IMR-90 (cell line): ENCODE measurements at regions of chr5 and their contacts with region 1.

Region 1: DNA sequence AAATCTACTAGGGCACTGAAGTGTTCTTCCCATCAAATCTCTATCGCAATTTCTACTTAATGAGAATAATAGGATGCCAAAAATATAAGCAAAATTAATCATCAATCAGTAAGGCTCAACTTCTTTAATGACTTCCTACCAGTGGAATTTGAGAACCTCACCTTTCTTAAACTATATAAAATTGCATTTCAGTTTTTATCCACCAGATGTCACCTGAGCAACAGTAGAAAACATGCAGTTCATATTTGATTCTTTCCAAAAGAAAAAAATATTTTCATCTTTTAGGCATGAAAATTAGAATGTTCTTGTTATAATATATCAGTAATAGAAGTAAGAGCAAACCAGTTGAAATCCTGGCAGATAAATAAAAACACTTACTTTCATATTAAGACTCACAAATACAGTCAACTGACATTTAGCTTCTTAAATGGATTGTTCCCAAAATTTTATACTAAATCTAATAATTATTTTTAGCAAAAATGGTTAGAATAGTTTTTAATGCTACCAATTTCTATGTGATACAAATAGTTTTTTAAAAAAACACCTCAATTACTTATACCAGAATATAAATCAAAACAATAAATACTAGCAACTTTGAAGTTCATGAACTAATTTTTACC is 13.4 kb upstream of the CCDC112 start:
- DNase-seq: peak; percentile 58
- ATAC-seq: peak; percentile 72
- H3K4me3 ChIP-seq: no peak overlapping the region
- H3K27ac ChIP-seq: no peak overlapping the region
- H3K4me1 ChIP-seq: no peaks in the 10 kb centered on the region
- H3K27me3 ChIP-seq: peaks cover 3% of the 10 kb centered on the region
- CTCF ChIP-seq: peak; percentile 74
- POLR2A ChIP-seq: no peak
- RAD21 ChIP-seq: peak; percentile 79

Region 2: GRCh38 chr5:115262321-115263077 is 47.4 kb before region 1 on chr5 and contains the start of gene PGGT1B:
- CTCF ChIA-PET with region 1: no interaction called
- POLR2A ChIA-PET with region 1: no interaction called
- dilution Hi-C with region 1: no loop called
- in situ Hi-C with region 1: no loop called
- intact Hi-C with region 1: no loop called
- DNase-seq: peak; percentile 55
- ATAC-seq: peak; percentile 93
- H3K4me3 ChIP-seq: peak within 1 kb of the TSS; percentile 79
- H3K27ac ChIP-seq: peak within 1 kb of the TSS; percentile 91
- H3K4me1 ChIP-seq: peaks cover 7% of the 10 kb centered on the region; the same call in 1 of the 2 replicates
- H3K27me3 ChIP-seq: no peaks in the 10 kb centered on the region
- CTCF ChIP-seq: no peak
- POLR2A ChIP-seq: peak; percentile 78
- RAD21 ChIP-seq: no peak
- total RNA-seq, gene PGGT1B: 17.2 and 19.2 TPM in 2 replicates

Region 3: GRCh38 chr5:115349020-115349817 is 39.4 kb after region 1 on chr5:
- CTCF ChIA-PET with region 1: no interaction called
- POLR2A ChIA-PET with region 1: no interaction called
- dilution Hi-C with region 1: no loop called
- in situ Hi-C with region 1: no loop called
- intact Hi-C with region 1: no loop called
- DNase-seq: peak; percentile 90
- ATAC-seq: peak; percentile 91
- H3K4me3 ChIP-seq: no peak overlapping the region
- H3K27ac ChIP-seq: no peak overlapping the region
- H3K4me1 ChIP-seq: peaks cover 5% of the 10 kb centered on the region
- H3K27me3 ChIP-seq: no peaks in the 10 kb centered on the region
- CTCF ChIP-seq: no peak; the same call in 1 of the 2 replicates
- POLR2A ChIP-seq: no peak
- RAD21 ChIP-seq: no peak

Region 4: GRCh38 chr5:115377468-115378217 is 67.8 kb after region 1 on chr5:
- CTCF ChIA-PET with region 1: interaction called, 6 read pairs
- POLR2A ChIA-PET with region 1: no interaction called
- dilution Hi-C with region 1: no loop called
- in situ Hi-C with region 1: no loop called
- intact Hi-C with region 1: loop called (anchors 5 kb)
- DNase-seq: peak; percentile 94
- ATAC-seq: peak; percentile 93
- H3K4me3 ChIP-seq: peak overlapping the region; percentile 0; the same call in 1 of the 2 replicates
- H3K27ac ChIP-seq: peak overlapping the region; percentile 35; the same call in 1 of the 2 replicates
- H3K4me1 ChIP-seq: peaks cover 6% of the 10 kb centered on the region
- H3K27me3 ChIP-seq: no peaks in the 10 kb centered on the region
- CTCF ChIP-seq: peak; percentile 48
- POLR2A ChIP-seq: no peak
- RAD21 ChIP-seq: peak; percentile 59

Region 5: DNA sequence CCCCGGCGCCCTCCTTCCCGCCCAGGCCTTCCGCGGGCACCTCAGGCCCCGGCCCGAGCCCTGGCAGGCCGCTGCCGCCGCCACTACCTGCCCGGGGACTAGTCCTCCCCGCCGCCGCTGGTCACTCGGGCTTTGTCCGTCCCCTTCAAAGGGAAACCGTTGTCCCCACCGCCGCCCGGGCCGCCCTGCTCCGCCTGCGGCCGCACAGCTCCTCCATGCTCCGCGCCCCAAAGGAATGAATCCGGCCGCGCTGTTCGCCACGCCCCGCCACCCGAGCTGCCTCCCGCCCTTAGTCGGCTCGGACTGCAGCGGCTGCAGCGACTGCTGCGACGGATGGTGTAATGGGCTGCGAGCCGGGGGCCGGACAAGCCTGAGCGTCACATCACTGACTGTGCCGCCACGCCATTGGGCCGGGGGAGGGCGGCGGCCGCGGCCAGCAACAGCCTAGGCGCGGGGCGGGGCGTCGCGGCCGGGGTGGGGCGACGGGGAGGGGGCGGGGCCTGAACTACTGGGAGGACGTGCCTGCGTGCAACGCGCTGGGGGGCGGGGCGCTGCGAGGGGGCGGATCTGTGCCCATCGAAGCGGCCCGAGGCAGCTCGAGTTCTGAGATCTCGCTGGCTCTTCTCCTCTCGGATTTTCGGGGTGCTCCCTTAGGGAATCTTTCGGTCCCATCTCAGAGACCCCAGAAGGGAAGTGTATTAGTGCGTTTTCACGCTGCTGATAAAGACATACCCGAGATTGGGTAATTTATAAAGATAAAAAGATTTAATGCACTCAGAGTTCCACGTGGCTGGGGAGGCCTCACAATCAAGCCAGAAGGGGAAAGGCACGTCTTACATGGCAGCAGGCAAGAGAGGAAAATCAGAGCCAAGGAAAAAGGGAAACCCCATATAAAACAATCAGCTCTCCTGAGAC is 234.8 kb after region 1 on chr5 and contains the start of gene FEM1C:
- CTCF ChIA-PET with region 1: interaction called, 6 read pairs
- POLR2A ChIA-PET with region 1: no interaction called
- dilution Hi-C with region 1: no loop called
- in situ Hi-C with region 1: no loop called
- intact Hi-C with region 1: loop called (anchors 2 kb)
- DNase-seq: peak; percentile 97
- ATAC-seq: peak; percentile 97
- H3K4me3 ChIP-seq: peak within 1 kb of the TSS; percentile 86
- H3K27ac ChIP-seq: peak within 1 kb of the TSS; percentile 92
- H3K4me1 ChIP-seq: peaks cover 2% of the 10 kb centered on the region; the same call in 1 of the 2 replicates
- H3K27me3 ChIP-seq: no peaks in the 10 kb centered on the region
- CTCF ChIP-seq: no peak
- POLR2A ChIP-seq: peak; percentile 97
- RAD21 ChIP-seq: no peak
- total RNA-seq, gene FEM1C: 21.5 and 30.3 TPM in 2 replicates

Region 6: DNA sequence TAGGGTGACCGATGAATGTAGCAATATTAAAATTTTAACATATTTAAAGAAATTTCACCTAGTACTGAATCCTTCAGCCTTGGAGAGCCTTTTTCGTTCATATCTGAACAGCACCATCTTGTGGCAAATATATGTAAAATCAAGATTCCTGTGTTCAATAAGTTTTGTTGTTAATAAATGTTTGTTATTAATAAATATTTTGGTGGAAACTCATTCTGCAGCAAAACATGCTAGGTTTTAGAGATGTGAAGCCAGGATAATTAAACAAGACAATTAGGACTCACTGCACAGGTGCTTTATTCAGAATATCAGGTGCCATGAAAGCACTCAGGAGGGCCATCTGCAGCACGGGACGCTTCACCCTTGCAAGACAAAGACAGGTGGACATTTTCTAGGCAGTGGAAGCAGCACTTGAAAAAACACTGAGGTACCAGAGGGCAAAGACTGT is 276.8 kb after region 1 on chr5:
- CTCF ChIA-PET with region 1: interaction called, 5 read pairs
- POLR2A ChIA-PET with region 1: no interaction called
- dilution Hi-C with region 1: no loop called
- in situ Hi-C with region 1: loop called (anchors 5 kb)
- intact Hi-C with region 1: loop called (anchors 1 kb)
- DNase-seq: peak; percentile 54
- ATAC-seq: peak; percentile 52; the same call in 1 of the 2 replicates
- H3K4me3 ChIP-seq: no peak overlapping the region
- H3K27ac ChIP-seq: no peak overlapping the region
- H3K4me1 ChIP-seq: peaks cover 6% of the 10 kb centered on the region
- H3K27me3 ChIP-seq: no peaks in the 10 kb centered on the region
- CTCF ChIP-seq: peak; percentile 67
- POLR2A ChIP-seq: no peak
- RAD21 ChIP-seq: peak; percentile 77

Region 7: DNA sequence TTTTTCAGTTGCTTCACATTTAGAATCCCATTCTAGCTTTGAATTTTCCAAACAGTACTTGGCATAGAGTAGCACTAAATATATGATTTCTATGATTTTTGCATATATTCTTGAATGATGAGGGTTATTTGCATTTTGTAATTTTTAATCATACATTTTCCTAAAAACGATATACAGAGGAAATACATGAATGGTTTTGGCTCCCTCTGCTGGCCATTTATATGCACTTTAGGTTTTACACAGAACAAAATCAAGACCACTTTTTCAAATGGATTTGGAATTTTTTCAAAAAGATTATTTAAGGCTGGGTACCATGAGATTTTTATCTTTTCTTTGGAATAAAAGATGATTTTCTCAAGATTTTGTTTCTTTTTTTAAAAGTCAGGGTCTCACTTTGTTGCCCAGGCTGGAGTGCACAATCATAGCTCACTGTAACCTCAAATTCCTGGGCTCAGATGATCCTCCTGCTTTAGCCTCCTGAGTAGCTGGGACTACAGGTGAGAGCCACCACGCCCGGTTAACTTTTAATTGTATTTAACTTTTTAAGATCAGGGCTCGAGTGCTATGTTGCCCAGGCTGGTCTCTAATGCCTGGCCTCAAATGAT is 758.3 kb after region 1 on chr5:
- CTCF ChIA-PET with region 1: no interaction called
- POLR2A ChIA-PET with region 1: no interaction called
- dilution Hi-C with region 1: no loop called
- in situ Hi-C with region 1: loop called (anchors 25 kb)
- intact Hi-C with region 1: loop called (anchors 10 kb)
- DNase-seq: peak; percentile 72
- ATAC-seq: peak; percentile 66
- H3K4me3 ChIP-seq: no peak overlapping the region
- H3K27ac ChIP-seq: no peak overlapping the region
- H3K4me1 ChIP-seq: no peaks in the 10 kb centered on the region
- H3K27me3 ChIP-seq: peaks cover 3% of the 10 kb centered on the region; the same call in 1 of the 2 replicates
- CTCF ChIP-seq: peak; percentile 87
- POLR2A ChIP-seq: no peak
- RAD21 ChIP-seq: peak; percentile 82

Region 8: DNA sequence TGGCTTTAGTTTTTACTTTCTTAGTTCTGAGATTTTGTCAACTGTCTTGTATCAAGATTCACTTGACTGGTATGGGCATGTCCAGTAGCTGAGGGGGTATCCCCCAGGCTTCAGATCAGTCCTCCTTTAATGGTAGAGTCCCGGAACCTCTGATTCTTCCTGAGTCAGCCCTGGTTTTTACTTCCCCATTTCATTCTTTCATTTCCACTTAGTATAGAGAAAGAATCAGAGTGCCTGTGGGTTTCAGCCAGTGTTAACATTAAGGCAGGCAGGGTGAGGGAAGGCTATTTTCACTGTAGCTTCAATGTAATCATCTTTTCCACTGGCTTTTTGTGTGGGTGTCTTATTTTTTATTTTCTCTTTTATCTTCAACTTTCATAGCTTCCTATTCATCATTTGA is 766.6 kb after region 1 on chr5:
- CTCF ChIA-PET with region 1: no interaction called
- POLR2A ChIA-PET with region 1: no interaction called
- dilution Hi-C with region 1: no loop called
- in situ Hi-C with region 1: loop called (anchors 25 kb)
- intact Hi-C with region 1: loop called (anchors 10 kb)
- DNase-seq: no peak
- ATAC-seq: no peak
- H3K4me3 ChIP-seq: no peak overlapping the region
- H3K27ac ChIP-seq: no peak overlapping the region
- H3K4me1 ChIP-seq: no peaks in the 10 kb centered on the region
- H3K27me3 ChIP-seq: peaks cover 2% of the 10 kb centered on the region; the same call in 1 of the 2 replicates
- CTCF ChIP-seq: no peak
- POLR2A ChIP-seq: no peak
- RAD21 ChIP-seq: no peak